H1 (cell line): ENCODE measurements at regions of chr5 and their contacts with region 1.

Region 1: DNA sequence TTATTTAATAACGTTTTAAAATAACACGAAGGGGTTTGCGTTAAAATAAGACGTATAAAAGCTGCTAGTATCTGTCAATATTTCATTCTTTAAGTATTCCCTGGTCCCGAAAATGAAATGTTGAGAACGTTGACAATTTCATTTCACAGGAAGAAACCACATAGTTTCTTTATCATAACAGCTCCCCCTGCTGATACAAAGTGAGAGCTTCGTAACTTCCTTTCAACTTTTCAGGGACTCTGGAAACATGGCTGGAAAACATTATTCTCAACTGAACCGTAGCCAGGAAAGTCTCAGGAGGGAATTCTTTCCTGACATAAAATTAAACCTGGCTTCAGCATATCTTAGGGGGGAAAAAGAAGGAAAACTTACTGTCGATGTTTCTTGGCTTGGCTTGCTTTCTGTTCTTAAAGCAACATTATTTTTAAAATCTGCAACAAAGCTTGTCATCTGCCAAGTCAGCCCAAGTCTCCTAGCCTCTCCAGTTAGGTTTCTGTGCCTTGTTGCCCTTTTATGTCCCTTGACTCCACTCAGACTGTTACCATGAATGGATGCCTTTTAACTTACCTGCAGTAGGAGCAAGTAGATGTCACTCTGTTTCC is 122.9 kb upstream of the DAB2 start:
- DNase-seq: no peak
- H3K4me3 ChIP-seq: no peak overlapping the region
- H3K27ac ChIP-seq: no peak overlapping the region
- H3K4me1 ChIP-seq: peaks cover 0 to 4% (median 0%) of the 10 kb centered on the region in 4 experiments; a peak in 1 of 7 replicates
- H3K27me3 ChIP-seq: no peaks in the 10 kb centered on the region
- CTCF ChIP-seq: peak in 2 of 3 experiments; percentile 59 to 67; a peak in 3 of 4 replicates
- EP300 ChIP-seq: no peak
- POLR2A ChIP-seq: no peak
- RAD21 ChIP-seq: peak; percentile 74

Region 2: DNA sequence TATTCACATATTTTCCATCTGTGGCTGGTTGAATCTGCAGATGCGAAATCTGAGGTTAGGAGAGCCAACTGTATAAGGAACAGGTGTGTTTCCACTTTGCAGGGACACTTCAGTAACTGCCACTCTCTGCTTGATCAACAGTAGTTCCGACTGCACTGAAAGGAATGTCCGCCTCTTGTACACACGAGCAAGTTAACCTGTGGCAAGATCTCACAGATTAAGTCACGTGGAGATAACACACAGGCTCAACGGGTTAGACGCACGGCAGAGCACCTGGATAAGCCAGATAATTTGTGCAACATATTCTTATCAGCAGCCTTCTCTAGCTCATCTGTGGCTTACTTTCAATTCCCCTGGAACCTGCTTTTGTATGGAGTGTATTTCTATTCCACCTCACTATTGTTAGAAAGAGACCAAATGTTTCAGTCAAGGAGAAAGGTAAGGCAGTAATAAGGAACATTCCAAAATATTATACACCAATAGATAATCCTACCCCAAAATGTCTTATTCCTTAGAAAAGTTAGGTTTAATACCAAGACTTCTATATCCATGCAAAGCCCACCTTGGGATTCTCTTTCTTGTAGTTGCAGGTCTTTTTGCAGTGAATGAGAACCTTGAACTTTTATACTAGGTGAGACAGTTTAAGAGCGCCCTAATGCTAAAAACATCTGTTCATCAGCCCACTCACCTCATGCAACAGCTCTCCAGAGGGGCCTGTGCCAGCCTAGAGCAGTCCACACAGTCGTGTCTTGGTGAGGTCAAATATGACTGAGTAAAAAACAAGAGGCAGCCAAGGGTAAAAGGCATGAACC is 176.9 kb before region 1 on chr5:
- CTCF ChIA-PET with region 1: interaction called, 90 read pairs
- POLR2A ChIA-PET with region 1: no interaction called
- DNase-seq: no peak
- H3K4me3 ChIP-seq: no peak overlapping the region
- H3K27ac ChIP-seq: no peak overlapping the region
- H3K4me1 ChIP-seq: no peaks in the 10 kb centered on the region; a peak in 1 of 7 replicates
- H3K27me3 ChIP-seq: no peaks in the 10 kb centered on the region
- CTCF ChIP-seq: no peak
- EP300 ChIP-seq: no peak
- POLR2A ChIP-seq: no peak
- RAD21 ChIP-seq: no peak

Region 3: GRCh38 chr5:39412721-39413394 is 134.8 kb before region 1 on chr5:
- CTCF ChIA-PET with region 1: interaction called, 15 read pairs
- POLR2A ChIA-PET with region 1: no interaction called
- DNase-seq: no peak
- H3K4me3 ChIP-seq: no peak overlapping the region
- H3K27ac ChIP-seq: no peak overlapping the region
- H3K4me1 ChIP-seq: peaks cover 0 to 5% (median 2%) of the 10 kb centered on the region in 4 experiments; a peak in 2 of 7 replicates
- H3K27me3 ChIP-seq: no peaks in the 10 kb centered on the region
- CTCF ChIP-seq: no peak
- EP300 ChIP-seq: no peak
- POLR2A ChIP-seq: no peak
- RAD21 ChIP-seq: no peak

Region 4: DNA sequence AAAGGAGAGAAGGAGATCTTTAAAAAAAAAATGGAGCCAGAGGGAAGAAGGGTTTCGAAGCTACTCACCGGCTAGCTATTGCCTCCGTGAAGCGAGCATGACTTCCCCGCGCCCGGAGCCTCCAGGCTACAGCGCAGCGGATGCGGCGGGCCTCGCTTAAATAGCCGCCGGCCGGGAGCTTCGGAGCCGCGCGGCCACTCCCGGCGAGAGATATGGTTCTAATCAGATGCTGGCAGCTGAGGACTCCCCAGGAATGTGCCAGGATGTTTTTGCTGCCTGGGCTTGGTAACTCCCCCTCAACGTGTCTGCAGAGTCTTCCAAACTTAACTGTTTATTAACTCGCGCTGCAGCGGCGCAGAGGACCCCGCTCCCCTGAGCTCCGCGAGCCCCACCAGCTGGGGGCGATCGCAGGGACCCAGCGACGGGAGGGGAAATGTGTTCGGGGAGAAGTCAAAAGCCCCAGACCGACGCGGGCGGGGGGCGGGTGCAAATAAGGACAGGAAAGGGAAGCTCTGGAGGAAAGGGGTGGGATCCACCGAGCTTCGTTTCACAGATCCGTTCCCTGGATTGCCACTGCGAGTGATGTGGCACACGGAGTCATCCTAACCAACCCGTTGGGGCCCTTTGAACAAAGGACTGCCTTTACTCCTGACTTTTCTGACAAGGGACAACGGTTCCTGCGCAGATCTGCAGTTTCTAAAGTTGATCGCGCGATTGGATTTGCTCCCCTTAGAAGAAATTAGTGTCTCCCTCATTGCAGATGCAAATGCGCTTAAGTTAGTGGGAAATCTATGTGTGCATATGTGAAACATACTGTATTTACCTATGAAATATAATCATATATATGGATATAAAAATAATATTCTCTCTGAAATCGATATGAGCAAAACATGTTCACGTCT is 122.7 kb before region 1 on chr5 and contains the start of gene DAB2:
- CTCF ChIA-PET with region 1: interaction called, 26 read pairs
- POLR2A ChIA-PET with region 1: interaction called, 4 read pairs
- DNase-seq: peak; percentile 68 to 88
- H3K4me3 ChIP-seq: peak within 1 kb of the TSS; percentile 49 to 66 (median 54)
- H3K27ac ChIP-seq: no peak within 1 kb of the TSS
- H3K4me1 ChIP-seq: peaks cover 2 to 12% (median 9%) of the 10 kb centered on the region in 4 experiments; a peak in 5 of 7 replicates
- H3K27me3 ChIP-seq: peaks cover 0 to 2% (median under 1%) of the 10 kb centered on the region in 4 experiments; a peak in 2 of 7 replicates
- CTCF ChIP-seq: peak; percentile 53 to 66 (median 63)
- EP300 ChIP-seq: no peak
- POLR2A ChIP-seq: 0 out of 3 replicates have a peak, but pooled peaks of 1 of the 2 experiments have one; percentile 20
- RAD21 ChIP-seq: peak; percentile 18 to 51; a peak in 3 of 4 replicates
- total RNA-seq, gene DAB2: 4.9 and 5.0 TPM in 2 replicates

Region 5: GRCh38 chr5:39755986-39756385 is 208.3 kb after region 1 on chr5:
- CTCF ChIA-PET with region 1: no interaction called
- POLR2A ChIA-PET with region 1: no interaction called
- DNase-seq: no peak
- H3K4me3 ChIP-seq: no peak overlapping the region
- H3K27ac ChIP-seq: no peak overlapping the region
- H3K4me1 ChIP-seq: no peaks in the 10 kb centered on the region
- H3K27me3 ChIP-seq: no peaks in the 10 kb centered on the region
- CTCF ChIP-seq: no peak
- EP300 ChIP-seq: no peak
- POLR2A ChIP-seq: no peak
- RAD21 ChIP-seq: no peak

Region 6: DNA sequence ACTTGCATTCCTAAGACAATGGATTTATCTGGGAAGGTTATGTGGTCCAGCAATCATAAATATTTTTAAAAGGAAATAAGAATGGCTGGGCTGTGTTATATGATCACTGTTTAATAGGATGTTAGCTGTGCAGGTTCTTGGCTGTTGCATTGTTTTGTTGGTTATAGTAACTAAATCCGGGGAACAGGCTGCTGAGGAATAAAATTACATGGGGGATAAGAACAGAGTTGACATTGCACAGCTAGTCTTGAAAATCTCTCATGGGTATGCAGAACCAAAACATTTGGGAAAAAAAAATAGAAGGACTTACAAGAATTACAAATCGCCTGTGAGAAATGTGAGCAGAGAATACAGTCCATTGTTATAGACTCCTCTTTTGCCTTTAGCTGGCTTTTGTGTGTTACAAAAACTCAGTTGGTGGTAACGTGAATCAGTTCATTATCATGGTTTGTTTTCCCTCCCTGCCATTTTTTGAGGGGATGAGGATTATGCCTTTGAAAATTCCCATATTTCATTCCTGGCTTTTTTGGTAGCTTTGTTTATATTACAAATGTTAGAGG is 252.5 kb after region 1 on chr5:
- CTCF ChIA-PET with region 1: no interaction called
- POLR2A ChIA-PET with region 1: no interaction called
- DNase-seq: no peak
- H3K4me3 ChIP-seq: peak overlapping the region in 1 of 4 experiments; percentile 25; a peak in 1 of 8 replicates
- H3K27ac ChIP-seq: no peak overlapping the region
- H3K4me1 ChIP-seq: peaks cover 0 to 8% (median 0%) of the 10 kb centered on the region in 4 experiments; a peak in 2 of 7 replicates
- H3K27me3 ChIP-seq: no peaks in the 10 kb centered on the region
- CTCF ChIP-seq: no peak
- EP300 ChIP-seq: no peak
- POLR2A ChIP-seq: no peak
- RAD21 ChIP-seq: no peak